Activated naive CD4-positive, alpha-beta T cell treated with anti-CD3 and anti-CD28 coated beads for 36 hours (primary cell): ENCODE measurements at regions of chr19 and their contacts with region 1.

Region 1: GRCh38 chr19:46186101-46187100 is 38.4 kb downstream of the IGFL2 start:
- DNase-seq: no peak
- H3K4me3 Mint-ChIP-seq: no peak overlapping the region
- H3K27ac Mint-ChIP-seq: peak overlapping the region; percentile 93
- H3K4me1 Mint-ChIP-seq: peaks cover 35% of the 10 kb centered on the region
- H3K27me3 Mint-ChIP-seq: peaks cover 38% of the 10 kb centered on the region

Region 2: GRCh38 chr19:46022431-46023310 is 163.7 kb before region 1 on chr19 and contains the start of gene PGLYRP1:
- CTCF ChIA-PET with region 1: interaction called, 12 read pairs
- intact Hi-C with region 1: no loop called
- DNase-seq: no peak
- H3K4me3 Mint-ChIP-seq: no peak within 1 kb of the TSS
- H3K27ac Mint-ChIP-seq: no peak within 1 kb of the TSS
- H3K4me1 Mint-ChIP-seq: peaks cover 9% of the 10 kb centered on the region
- H3K27me3 Mint-ChIP-seq: peaks cover 12% of the 10 kb centered on the region
- total RNA-seq, gene PGLYRP1: not detected

Region 3: DNA sequence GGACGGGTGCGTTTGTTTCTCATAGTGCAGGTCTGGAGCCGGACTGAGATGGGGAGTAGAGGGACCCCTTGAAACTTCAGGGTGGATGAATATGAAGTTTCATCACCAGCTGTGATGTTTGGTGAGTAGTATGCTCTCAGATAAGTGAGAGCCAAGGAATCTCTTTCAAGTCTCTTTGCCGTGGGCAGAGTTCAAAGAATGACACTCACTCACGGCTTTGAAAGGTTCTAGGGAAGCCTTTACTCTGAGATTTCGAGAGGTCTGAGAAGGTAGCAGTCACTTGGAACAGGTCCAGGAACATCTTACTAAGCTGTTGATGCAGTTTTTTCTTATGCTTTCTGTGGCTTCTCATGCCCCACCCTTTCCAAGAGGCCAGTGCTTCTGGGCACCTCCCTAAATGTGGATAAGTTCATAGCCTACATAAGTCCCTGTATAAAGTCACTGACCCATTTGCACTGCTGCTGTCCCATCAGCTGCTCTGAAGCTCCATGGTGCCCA is 38.6 kb before region 1 on chr19 and contains the start of gene IGFL2:
- CTCF ChIA-PET with region 1: interaction called, 3 read pairs
- intact Hi-C with region 1: loop called (anchors 5 kb)
- DNase-seq: peak; percentile 43
- H3K4me3 Mint-ChIP-seq: no peak within 1 kb of the TSS
- H3K27ac Mint-ChIP-seq: no peak within 1 kb of the TSS
- H3K4me1 Mint-ChIP-seq: peaks cover 10% of the 10 kb centered on the region
- H3K27me3 Mint-ChIP-seq: peaks cover 35% of the 10 kb centered on the region
- total RNA-seq, gene IGFL2: not detected